Sciatic nerve (tissue), 2 donors: ENCODE measurements at regions of chr2 and their contacts with region 1.

Region 1: DNA sequence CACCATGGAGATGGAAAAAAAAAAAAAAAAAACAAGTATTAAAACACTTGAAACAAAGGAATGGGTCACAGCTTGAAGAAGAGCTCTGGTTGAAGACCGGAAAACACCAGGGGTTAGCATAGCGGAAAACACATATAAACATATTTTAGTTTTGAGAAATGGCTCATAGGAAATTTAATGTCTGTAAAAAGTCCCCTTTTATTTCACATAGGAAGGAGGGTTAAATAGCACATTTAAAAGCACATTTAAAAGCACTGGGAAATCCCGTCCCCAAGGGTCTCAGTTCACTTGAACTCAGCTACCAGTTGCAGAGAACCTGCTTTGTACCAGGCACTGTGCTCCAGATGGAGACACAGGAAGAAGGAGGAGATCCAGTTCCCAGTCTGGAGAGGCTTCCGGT is 65.5 kb downstream of the KCNE4 start:
- DNase-seq: no peak
- ATAC-seq: no peak

Region 2: GRCh38 chr2:222364285-222364895 is 753.1 kb before region 1 on chr2:
- intact Hi-C with region 1: loop called (anchors 5 kb)
- DNase-seq: no peak
- ATAC-seq: no peak